ENCODE measurements at regions of chr10 and their contacts with region 1.

Region 1: DNA sequence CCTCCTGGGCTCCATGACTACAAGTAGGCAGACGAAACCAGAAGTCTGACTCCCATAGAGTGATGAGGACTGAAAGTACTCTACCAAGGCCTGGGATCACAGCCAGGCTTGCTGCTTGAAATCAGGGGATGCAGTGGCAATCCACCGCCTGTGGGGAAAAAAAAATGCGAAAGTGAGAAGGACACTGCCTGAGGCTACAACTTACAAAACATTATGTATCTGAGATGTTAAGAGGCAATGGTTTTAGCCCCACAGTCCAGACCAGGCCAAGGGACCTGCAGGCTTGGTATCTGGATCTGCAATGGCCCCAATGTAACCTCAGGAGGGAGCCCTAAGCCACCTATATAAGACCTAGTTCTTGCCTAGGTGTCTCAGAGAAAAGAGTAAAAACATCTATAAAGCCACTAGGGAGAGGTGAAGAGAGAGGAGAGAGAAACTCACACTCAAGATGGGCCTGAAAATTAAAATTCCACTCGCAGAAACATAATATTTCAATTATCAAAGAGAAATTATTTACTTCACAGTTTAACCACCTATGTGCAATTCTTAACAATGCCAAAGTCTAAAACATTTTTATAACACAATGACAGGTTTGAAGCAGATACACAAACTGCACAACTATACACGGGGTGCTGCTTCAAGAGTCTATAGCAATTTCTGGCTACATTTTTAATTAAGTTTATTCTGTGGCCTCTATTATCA is 13.9 kb downstream of the DNAJC1 start:
- DNase-seq: no peak
- ATAC-seq: peak; percentile 68
- H3K4me3 Mint-ChIP-seq: no peak overlapping the region
- H3K27ac Mint-ChIP-seq: no peak overlapping the region
- H3K4me1 Mint-ChIP-seq: no peaks in the 10 kb centered on the region
- H3K27me3 Mint-ChIP-seq: no peaks in the 10 kb centered on the region
- CTCF ChIP-seq: no peak

Region 2: GRCh38 chr10:22003079-22003913 is 13.7 kb after region 1 on chr10 and contains the start of gene DNAJC1:
- CTCF ChIA-PET with region 1: interaction called, 24 read pairs
- POLR2A ChIA-PET with region 1: interaction called, 4 read pairs
- intact Hi-C with region 1: no loop called
- DNase-seq: peak; percentile 98
- ATAC-seq: peak; percentile 92
- H3K4me3 Mint-ChIP-seq: peak within 1 kb of the TSS; percentile 87
- H3K27ac Mint-ChIP-seq: peak within 1 kb of the TSS; percentile 91
- H3K4me1 Mint-ChIP-seq: peaks cover 41% of the 10 kb centered on the region
- H3K27me3 Mint-ChIP-seq: no peaks in the 10 kb centered on the region
- CTCF ChIP-seq: no peak
- total RNA-seq, gene DNAJC1: 9.2 and 10.9 TPM in 2 replicates

Region 3: DNA sequence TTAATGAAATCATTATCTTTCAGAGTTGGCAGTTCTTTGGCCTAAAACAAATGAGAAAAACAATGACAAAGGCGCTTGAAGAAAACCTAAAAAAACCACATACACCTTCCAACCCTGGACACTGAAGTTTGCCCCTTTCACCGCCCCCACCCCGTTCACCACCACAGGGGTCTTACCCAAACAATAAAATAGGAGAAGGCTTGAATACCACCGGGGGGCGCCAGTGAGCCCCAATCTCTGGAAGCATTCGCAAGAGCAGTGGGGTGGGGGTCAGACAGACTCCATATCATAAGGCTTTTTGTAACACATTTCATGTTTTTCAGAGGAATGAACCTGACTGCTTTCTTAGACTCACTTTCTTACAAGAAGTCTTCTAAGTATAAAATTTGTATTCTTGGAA is 561.1 kb after region 1 on chr10:
- CTCF ChIA-PET with region 1: interaction called, 4 read pairs
- POLR2A ChIA-PET with region 1: no interaction called
- intact Hi-C with region 1: loop called (anchors 1 kb)
- DNase-seq: peak; percentile 50
- ATAC-seq: peak; percentile 64
- H3K4me3 Mint-ChIP-seq: no peak overlapping the region
- H3K27ac Mint-ChIP-seq: no peak overlapping the region
- H3K4me1 Mint-ChIP-seq: peaks cover 3% of the 10 kb centered on the region
- H3K27me3 Mint-ChIP-seq: no peaks in the 10 kb centered on the region
- CTCF ChIP-seq: no peak

Region 4: DNA sequence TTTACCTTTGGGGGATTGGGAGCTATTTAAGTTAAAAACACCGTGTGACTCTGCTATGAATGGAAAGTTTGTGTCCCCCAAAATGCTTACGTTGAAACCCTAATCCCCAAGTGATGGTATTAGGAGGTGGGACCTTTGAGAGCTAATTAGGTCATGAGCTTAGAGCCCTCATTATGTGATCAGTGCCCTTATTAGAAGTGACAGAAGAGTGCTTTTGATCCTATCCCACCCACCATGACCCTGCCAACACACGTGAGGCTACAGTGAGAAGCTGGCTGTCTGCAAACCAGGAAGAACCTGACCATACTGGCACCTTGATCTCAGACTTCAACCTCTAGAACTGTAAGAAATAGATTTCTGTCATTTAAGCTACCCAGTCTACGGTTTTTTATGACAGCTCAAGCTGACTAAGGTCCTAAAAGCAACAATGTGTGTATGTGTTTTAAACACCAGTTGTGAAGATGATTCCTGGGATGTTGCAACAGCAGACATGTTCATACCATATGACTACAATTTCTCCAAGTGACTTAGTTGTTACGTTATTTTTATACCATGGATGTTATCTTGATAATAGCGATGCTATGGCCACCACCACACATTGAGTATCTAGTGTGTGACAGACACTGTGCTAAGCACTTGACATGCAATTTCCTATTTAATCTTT is 600.4 kb after region 1 on chr10:
- CTCF ChIA-PET with region 1: interaction called, 6 read pairs
- POLR2A ChIA-PET with region 1: no interaction called
- intact Hi-C with region 1: loop called (anchors 5 kb)
- DNase-seq: no peak
- ATAC-seq: no peak
- H3K4me3 Mint-ChIP-seq: no peak overlapping the region
- H3K27ac Mint-ChIP-seq: no peak overlapping the region
- H3K4me1 Mint-ChIP-seq: peaks cover 37% of the 10 kb centered on the region
- H3K27me3 Mint-ChIP-seq: no peaks in the 10 kb centered on the region
- CTCF ChIP-seq: no peak

Region 5: DNA sequence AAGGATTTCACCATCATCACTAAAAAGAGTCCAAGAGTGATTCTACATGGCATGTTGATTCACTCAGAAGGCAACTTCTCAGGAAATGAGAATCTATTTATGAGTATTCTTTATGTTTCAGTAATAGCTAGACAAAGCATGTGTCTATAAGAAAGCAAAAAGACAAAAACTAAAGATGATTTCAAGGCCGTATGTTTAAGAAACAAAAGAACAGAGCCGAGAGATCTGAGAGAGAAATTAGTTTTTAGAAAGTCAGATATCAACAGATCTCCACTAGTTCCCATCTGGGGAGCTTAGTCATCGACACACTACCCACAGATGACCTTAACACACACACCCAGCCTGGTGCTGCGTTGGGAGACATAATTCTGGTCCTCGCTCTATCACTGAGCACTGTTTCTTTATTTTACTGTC is 703.8 kb after region 1 on chr10:
- CTCF ChIA-PET with region 1: no interaction called
- POLR2A ChIA-PET with region 1: no interaction called
- intact Hi-C with region 1: no loop called
- DNase-seq: no peak
- ATAC-seq: peak; percentile 52
- H3K4me3 Mint-ChIP-seq: no peak overlapping the region
- H3K27ac Mint-ChIP-seq: peak overlapping the region; percentile 69
- H3K4me1 Mint-ChIP-seq: peaks cover 79% of the 10 kb centered on the region
- H3K27me3 Mint-ChIP-seq: no peaks in the 10 kb centered on the region
- CTCF ChIP-seq: no peak

Region 6: DNA sequence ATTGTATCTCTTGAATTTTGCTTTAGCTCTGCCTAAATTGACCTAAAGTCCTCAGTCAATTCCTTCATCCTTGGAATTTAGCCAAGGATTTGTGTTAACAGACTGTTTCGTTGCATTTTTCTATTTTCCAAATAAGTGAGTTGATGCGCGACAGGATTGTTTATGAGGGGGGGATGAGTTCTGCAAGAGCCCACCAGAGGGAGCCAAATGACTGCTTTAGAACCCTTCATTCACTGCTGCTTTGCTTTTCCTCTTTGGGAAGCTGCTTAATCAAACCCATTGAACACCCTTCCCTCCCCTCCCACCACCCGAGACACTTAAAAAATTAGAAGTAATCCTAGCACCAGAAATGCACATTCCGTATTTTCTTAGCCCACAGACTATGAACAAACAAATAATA is 1168.8 kb after region 1 on chr10:
- CTCF ChIA-PET with region 1: interaction called, 4 read pairs
- POLR2A ChIA-PET with region 1: no interaction called
- intact Hi-C with region 1: loop called (anchors 1 kb)
- DNase-seq: no peak
- ATAC-seq: peak; percentile 66
- H3K4me3 Mint-ChIP-seq: no peak overlapping the region
- H3K27ac Mint-ChIP-seq: no peak overlapping the region
- H3K4me1 Mint-ChIP-seq: peaks cover 3% of the 10 kb centered on the region
- H3K27me3 Mint-ChIP-seq: peaks cover 21% of the 10 kb centered on the region
- CTCF ChIP-seq: peak; percentile 92

Region 7: DNA sequence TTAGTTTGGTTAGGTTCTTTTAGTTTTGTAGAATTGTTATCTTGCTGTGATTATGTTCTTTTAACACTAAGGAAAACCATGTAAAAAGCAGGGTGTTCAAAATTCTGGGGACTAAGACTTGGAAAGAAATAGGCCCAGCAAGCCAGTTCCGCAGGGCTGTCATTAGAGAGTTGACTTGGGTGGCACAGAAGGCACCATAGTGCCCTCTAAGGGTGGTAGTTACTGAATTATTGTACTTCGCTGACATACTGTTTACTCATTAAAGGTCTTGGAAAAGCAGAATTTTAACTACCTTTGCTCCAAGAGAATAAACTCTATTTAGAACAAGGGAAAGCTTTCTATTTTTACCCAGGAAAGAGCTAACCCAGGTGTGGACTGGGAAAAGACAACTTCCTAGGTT is 1535.8 kb after region 1 on chr10:
- CTCF ChIA-PET with region 1: no interaction called
- POLR2A ChIA-PET with region 1: no interaction called
- intact Hi-C with region 1: loop called (anchors 5 kb)
- DNase-seq: no peak
- ATAC-seq: peak; percentile 75
- H3K4me3 Mint-ChIP-seq: no peak overlapping the region
- H3K27ac Mint-ChIP-seq: no peak overlapping the region
- H3K4me1 Mint-ChIP-seq: peaks cover 31% of the 10 kb centered on the region
- H3K27me3 Mint-ChIP-seq: no peaks in the 10 kb centered on the region
- CTCF ChIP-seq: no peak